Right ventricle myocardium inferior (tissue), 1 donor: ENCODE measurements at regions of chr1 and their contacts with region 1.

Region 1: DNA sequence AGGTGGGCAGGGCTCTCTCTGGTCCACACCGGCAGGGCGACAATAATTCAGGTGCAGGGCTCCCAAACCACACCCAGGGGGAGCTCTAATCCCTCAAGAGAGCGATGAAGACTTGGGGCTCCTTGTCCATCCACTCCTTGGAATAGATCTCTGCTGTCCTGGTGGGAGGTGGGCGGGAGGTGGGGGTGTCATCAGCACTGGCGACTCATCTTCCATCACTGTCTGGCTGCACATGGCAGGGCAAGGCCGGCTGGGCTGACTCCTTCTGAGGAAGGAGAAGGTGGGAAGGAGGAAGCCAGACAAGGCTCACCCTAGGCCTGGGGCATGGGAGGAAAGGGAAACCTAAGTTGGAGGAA is 29.3 kb downstream of the TNNT2 start:
- DNase-seq: no peak
- ATAC-seq: peak; percentile 37

Region 2: DNA sequence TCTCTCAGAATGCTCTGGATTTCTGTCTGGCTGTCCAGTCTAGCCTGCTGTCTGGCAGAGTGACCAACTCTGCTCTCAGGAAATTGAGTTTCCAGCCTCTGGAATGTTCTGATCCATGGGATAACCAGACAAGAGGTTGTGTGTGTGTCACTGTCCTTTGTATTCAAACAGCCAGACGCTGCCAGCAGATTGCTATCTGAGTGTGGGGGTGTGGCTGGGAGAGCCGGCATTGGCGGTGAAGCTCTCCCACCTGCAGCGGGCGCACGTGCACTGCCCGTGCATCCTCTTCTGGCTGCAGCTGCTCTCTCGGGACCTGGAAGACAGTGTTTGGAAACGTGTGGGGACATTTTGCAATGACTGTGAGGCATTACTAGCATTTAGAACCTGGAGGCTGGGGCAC is 38.8 kb before region 1 on chr1:
- intact Hi-C with region 1: loop called (anchors 1 kb)
- DNase-seq: peak; percentile 79
- ATAC-seq: peak; percentile 63

Region 3: GRCh38 chr1:201408176-201408833 is 60.1 kb after region 1 on chr1:
- intact Hi-C with region 1: loop called (anchors 5 kb)
- DNase-seq: peak; percentile 83
- ATAC-seq: peak; percentile 89